Heart right ventricle (tissue), 16 donors: ENCODE measurements at regions of chr11 and their contacts with region 1.

Region 1: GRCh38 chr11:67146516-67147226 is 27.6 kb downstream of the KDM2A start:
- DNase-seq: no peak
- ATAC-seq: no peak
- H3K4me3 ChIP-seq: no peak overlapping the region
- H3K27ac ChIP-seq: peak overlapping the region in 1 of 10 donors; percentile 47
- H3K4me1 ChIP-seq: peaks cover 0 to 13% (median 7%) of the 10 kb centered on the region in 9 donors
- H3K27me3 ChIP-seq: no peaks in the 10 kb centered on the region
- CTCF ChIP-seq: no peak

Region 2: GRCh38 chr11:68181719-68182451 is 1035.2 kb after region 1 on chr11:
- intact Hi-C with region 1: loop called in 1 of 10 experiments (anchors 5 kb)
- DNase-seq: no peak
- ATAC-seq: no peak
- H3K4me3 ChIP-seq: no peak overlapping the region
- H3K27ac ChIP-seq: no peak overlapping the region
- H3K4me1 ChIP-seq: peaks cover 0 to 8% (median 0%) of the 10 kb centered on the region in 9 donors
- H3K27me3 ChIP-seq: no peaks in the 10 kb centered on the region
- CTCF ChIP-seq: no peak